ENCODE measurements at regions of chr2 and their contacts with region 1.

Region 1: DNA sequence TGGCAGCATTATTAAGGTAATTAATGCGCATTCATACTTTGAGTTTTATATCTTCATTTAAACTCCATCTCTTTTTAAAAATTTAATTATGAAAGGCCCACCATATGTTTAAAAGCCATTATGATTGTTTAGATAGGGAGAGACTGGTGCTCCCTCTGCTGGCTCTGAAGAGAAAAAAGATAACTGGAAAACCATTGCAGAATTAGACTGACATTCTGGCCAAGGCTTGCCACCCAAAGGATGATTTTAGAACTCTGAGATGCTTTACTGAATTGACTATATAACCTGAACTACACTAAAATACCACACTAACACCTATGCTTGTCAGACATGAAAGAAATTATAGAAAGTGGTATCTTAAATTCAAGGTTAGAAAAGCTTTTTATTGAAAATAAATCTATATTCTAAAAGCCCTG is 127.6 kb upstream of the SPOPL start:
- DNase-seq: no peak
- H3K4me3 Mint-ChIP-seq: no peak overlapping the region
- H3K27ac Mint-ChIP-seq: no peak overlapping the region
- H3K4me1 Mint-ChIP-seq: no peaks in the 10 kb centered on the region
- H3K27me3 Mint-ChIP-seq: no peaks in the 10 kb centered on the region

Region 2: DNA sequence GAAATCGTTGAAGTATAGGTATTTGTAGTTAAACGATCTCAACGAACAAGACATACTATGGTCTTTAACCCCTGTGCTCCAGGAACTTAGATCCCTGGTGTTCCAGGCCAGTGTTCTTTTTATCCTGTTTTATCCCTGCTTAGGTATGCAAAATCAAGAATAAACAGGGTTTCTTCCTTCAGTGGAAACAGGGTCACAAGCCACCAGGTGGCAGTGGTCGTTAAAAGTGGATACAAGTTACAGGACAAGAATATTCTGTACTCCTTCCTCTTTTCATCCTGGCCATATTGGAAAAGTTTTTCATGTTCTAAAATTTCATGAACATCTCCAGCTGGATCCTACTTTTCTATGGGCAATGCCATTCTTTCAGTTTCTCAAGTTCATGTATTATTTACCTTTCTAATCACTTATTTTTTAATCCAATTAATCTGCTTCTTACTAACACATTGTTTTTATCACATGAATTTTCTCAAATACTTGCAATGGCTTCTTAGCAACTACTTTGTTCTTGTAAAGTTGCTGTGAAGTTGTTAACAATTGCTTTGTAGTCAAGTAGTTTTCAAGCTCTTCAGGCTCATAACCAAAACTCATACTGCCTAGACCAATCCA is 426.2 kb before region 1 on chr2:
- intact Hi-C with region 1: loop called (anchors 10 kb)
- DNase-seq: no peak
- H3K4me3 Mint-ChIP-seq: no peak overlapping the region
- H3K27ac Mint-ChIP-seq: no peak overlapping the region
- H3K4me1 Mint-ChIP-seq: peaks cover 8% of the 10 kb centered on the region
- H3K27me3 Mint-ChIP-seq: no peaks in the 10 kb centered on the region

Region 3: GRCh38 chr2:138255670-138256069 is 118.3 kb before region 1 on chr2:
- intact Hi-C with region 1: no loop called
- DNase-seq: no peak
- H3K4me3 Mint-ChIP-seq: no peak overlapping the region
- H3K27ac Mint-ChIP-seq: no peak overlapping the region
- H3K4me1 Mint-ChIP-seq: no peaks in the 10 kb centered on the region
- H3K27me3 Mint-ChIP-seq: no peaks in the 10 kb centered on the region

Region 4: GRCh38 chr2:138335036-138335435 is 39.0 kb before region 1 on chr2:
- intact Hi-C with region 1: no loop called
- DNase-seq: no peak
- H3K4me3 Mint-ChIP-seq: no peak overlapping the region
- H3K27ac Mint-ChIP-seq: no peak overlapping the region
- H3K4me1 Mint-ChIP-seq: no peaks in the 10 kb centered on the region
- H3K27me3 Mint-ChIP-seq: no peaks in the 10 kb centered on the region